ENCODE measurements at regions of chr5 and their contacts with region 1.

Region 1: GRCh38 chr5:142894749-142895148 is 124.6 kb downstream of the ARHGAP26 start:
- DNase-seq: no peak
- H3K4me3 ChIP-seq: no peak overlapping the region
- H3K27ac ChIP-seq: no peak overlapping the region
- H3K27me3 ChIP-seq: no peaks in the 10 kb centered on the region
- CTCF ChIP-seq: no peak

Region 2: DNA sequence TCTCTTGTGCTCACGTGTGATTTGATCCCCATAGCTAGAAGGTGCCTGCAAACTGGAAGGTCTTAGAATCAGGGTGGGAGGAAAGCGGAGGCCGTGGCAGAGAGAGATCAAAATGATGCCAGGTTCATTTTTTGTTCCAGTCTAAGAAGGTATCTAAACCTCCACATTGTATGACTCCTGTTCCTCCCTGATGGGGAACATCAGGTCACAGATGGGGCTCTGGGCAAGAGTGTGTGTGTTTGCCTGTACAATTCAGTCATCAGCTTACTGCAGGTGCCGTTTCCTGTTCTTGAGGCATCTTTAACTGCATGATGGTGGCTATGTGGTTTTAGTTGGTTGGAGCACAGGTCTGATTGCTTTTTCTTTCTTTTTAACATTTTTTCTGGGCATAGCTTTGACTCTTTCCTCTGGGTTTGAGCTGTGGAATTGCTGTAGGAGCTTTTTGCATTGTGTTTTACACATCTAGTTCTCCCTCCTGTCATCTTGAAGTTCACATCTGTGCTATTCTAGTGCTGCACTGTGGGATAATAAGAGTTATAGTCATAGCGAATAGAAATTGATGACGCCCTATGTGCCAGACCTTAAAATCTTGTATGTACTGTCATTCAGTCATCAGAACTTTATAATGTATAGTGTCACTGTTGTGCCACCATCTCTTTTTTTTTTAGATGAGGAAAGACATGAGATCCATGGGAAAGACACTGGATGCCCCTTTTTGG is 93.8 kb before region 1 on chr5:
- CTCF ChIA-PET with region 1: no interaction called
- POLR2A ChIA-PET with region 1: no interaction called
- DNase-seq: no peak
- H3K4me3 ChIP-seq: no peak overlapping the region
- H3K27ac ChIP-seq: no peak overlapping the region
- H3K27me3 ChIP-seq: peaks cover 33% of the 10 kb centered on the region
- CTCF ChIP-seq: no peak

Region 3: DNA sequence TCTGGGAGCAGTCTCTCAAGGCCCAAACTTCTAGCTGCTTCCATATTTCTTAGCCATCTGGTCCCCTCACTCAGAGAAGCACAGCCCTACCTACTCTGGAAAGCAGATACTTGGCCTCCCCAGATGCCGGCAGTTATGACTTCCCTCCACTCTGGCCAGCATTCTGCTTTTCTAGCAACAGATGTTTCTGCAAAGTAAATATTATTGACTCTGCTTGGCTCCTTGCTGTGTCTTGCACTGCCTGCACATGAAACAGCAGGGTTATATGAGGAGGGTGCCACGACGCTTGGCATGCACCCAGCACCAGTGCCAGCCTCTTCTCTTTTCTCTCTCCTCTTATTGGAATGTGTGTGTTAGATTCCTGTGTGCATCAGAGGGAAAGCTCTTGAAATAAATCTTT is 24.9 kb before region 1 on chr5:
- CTCF ChIA-PET with region 1: no interaction called
- POLR2A ChIA-PET with region 1: no interaction called
- DNase-seq: no peak
- H3K4me3 ChIP-seq: no peak overlapping the region
- H3K27ac ChIP-seq: no peak overlapping the region
- H3K27me3 ChIP-seq: peaks cover 28% of the 10 kb centered on the region
- CTCF ChIP-seq: no peak

Region 4: GRCh38 chr5:142881076-142881783 is 13.5 kb before region 1 on chr5:
- CTCF ChIA-PET with region 1: interaction called, 17 read pairs
- POLR2A ChIA-PET with region 1: no interaction called
- DNase-seq: peak; percentile 65
- H3K4me3 ChIP-seq: no peak overlapping the region
- H3K27ac ChIP-seq: no peak overlapping the region
- H3K27me3 ChIP-seq: peaks cover 4% of the 10 kb centered on the region
- CTCF ChIP-seq: no peak

Region 5: GRCh38 chr5:143086908-143087637 is 192.3 kb after region 1 on chr5:
- CTCF ChIA-PET with region 1: no interaction called
- POLR2A ChIA-PET with region 1: no interaction called
- DNase-seq: no peak
- H3K4me3 ChIP-seq: no peak overlapping the region
- H3K27ac ChIP-seq: no peak overlapping the region
- H3K27me3 ChIP-seq: no peaks in the 10 kb centered on the region
- CTCF ChIP-seq: no peak

Measured in AG04450 (cell line).